ENCODE measurements at regions of chr10 and their contacts with region 1.

Region 1: GRCh38 chr10:86880971-86881370 is 76.4 kb downstream of the MMRN2 start:
- DNase-seq: no peak
- H3K4me3 ChIP-seq: no peak overlapping the region
- H3K27ac ChIP-seq: peak overlapping the region in 1 of 4 donors; percentile 43
- H3K4me1 ChIP-seq: peaks cover 0 to 23% (median 14%) of the 10 kb centered on the region in 4 donors
- H3K27me3 ChIP-seq: no peaks in the 10 kb centered on the region
- CTCF ChIP-seq: no peak
- EP300 ChIP-seq: no peak
- POLR2A ChIP-seq: no peak

Region 2: DNA sequence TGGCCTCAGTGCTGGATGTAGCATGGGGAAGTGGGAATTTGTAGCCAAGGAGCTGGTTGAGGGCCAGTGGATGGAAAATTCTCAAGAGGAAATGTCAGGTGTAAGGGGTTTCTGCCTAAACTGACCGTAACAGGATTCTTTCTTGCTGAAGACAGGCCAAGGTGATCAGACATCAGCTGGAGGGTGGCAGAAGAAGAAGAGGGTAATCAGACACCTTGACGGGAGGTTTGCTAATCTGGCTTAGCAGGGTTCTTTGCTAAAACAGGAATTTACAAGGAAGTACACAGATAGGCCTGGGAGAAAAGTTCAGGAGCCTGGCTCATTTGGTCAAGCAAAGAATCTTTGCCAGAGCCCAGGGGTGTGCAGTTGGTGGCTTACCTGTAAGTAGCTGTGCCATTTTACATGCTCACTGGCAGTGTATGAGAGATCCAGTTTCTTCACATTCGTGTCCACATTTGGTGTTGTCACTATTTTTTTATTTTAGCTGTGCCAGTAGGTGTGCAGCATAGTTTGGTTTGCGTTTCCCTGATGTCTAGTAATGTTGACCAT is 50.9 kb before region 1 on chr10:
- intact Hi-C with region 1: loop called (anchors 5 kb)
- DNase-seq: no peak
- H3K4me3 ChIP-seq: no peak overlapping the region
- H3K27ac ChIP-seq: peak overlapping the region; percentile 48 to 73 (median 62)
- H3K4me1 ChIP-seq: peaks cover 0 to 99% (median 73%) of the 10 kb centered on the region in 4 donors
- H3K27me3 ChIP-seq: no peaks in the 10 kb centered on the region
- CTCF ChIP-seq: no peak
- EP300 ChIP-seq: no peak
- POLR2A ChIP-seq: no peak